ENCODE measurements at regions of chr7 and their contacts with region 1.

Region 1: GRCh38 chr7:92833024-92833765 is 3.2 kb downstream of the CDK6 start:
- DNase-seq: peak; percentile 81
- ATAC-seq: peak; percentile 65
- H3K4me3 Mint-ChIP-seq: peak overlapping the region; percentile 87
- H3K27ac Mint-ChIP-seq: peak overlapping the region; percentile 79
- H3K4me1 Mint-ChIP-seq: peaks cover 42% of the 10 kb centered on the region
- H3K27me3 Mint-ChIP-seq: no peaks in the 10 kb centered on the region
- CTCF ChIP-seq: no peak

Region 2: GRCh38 chr7:91940572-91941341 is 892.4 kb before region 1 on chr7 and contains the start of gene AKAP9:
- CTCF ChIA-PET with region 1: no interaction called
- POLR2A ChIA-PET with region 1: no interaction called
- intact Hi-C with region 1: loop called (anchors 5 kb)
- DNase-seq: peak; percentile 85
- ATAC-seq: peak; percentile 91
- H3K4me3 Mint-ChIP-seq: peak within 1 kb of the TSS; percentile 94
- H3K27ac Mint-ChIP-seq: peak within 1 kb of the TSS; percentile 93
- H3K4me1 Mint-ChIP-seq: peaks cover 42% of the 10 kb centered on the region
- H3K27me3 Mint-ChIP-seq: no peaks in the 10 kb centered on the region
- CTCF ChIP-seq: no peak
- total RNA-seq, gene AKAP9: 54.4 and 58.4 TPM in 2 replicates

Region 3: DNA sequence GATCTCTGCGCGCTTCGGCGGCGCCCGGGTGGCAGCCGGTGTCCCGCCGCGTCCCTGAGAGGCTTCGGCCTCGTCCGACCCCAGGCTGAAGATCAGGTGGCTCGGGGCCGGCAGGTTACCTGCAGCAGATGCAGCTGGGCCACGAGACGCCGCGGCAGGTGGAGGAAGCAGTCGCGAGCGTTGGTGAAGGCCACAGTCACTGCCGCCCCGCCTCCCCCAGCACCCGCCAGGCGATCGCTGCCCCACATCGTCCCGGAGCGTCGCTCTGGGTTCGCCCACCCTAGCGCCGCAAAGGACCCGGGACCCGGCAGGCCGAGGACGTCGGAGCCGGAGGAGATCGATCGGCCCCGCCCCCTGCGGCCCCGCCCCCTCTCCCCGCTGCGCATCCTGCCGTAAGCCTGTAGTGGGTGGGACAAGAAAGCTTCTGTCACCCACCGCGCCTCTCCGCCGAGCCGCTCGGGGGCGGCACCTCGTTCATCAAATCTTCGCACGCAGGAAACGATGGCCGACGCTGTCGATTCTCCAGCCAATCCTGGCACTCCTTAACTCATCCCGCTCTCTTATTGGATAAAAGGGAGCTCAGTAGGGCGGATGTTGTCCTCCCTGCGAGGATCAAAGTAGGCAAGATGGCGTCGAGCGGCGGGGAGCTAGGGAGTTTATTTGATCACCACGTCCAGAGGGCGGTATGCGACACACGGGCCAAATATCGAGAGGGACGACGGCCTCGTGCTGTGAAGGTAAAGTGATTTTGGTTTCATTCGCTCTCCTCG is 304.8 kb before region 1 on chr7 and contains the starts of genes PEX1 and RBM48:
- CTCF ChIA-PET with region 1: no interaction called
- POLR2A ChIA-PET with region 1: no interaction called
- intact Hi-C with region 1: loop called (anchors 1 kb)
- DNase-seq: peak; percentile 80
- ATAC-seq: peak; percentile 92
- H3K4me3 Mint-ChIP-seq: peak within 1 kb of the TSS; percentile 89
- H3K27ac Mint-ChIP-seq: peak within 1 kb of the TSS; percentile 93
- H3K4me1 Mint-ChIP-seq: peaks cover 24% of the 10 kb centered on the region
- H3K27me3 Mint-ChIP-seq: no peaks in the 10 kb centered on the region
- CTCF ChIP-seq: no peak
- total RNA-seq, gene PEX1: 18.2 and 21.8 TPM in 2 replicates
- total RNA-seq, gene RBM48: 21.6 and 24.3 TPM in 2 replicates

Region 4: DNA sequence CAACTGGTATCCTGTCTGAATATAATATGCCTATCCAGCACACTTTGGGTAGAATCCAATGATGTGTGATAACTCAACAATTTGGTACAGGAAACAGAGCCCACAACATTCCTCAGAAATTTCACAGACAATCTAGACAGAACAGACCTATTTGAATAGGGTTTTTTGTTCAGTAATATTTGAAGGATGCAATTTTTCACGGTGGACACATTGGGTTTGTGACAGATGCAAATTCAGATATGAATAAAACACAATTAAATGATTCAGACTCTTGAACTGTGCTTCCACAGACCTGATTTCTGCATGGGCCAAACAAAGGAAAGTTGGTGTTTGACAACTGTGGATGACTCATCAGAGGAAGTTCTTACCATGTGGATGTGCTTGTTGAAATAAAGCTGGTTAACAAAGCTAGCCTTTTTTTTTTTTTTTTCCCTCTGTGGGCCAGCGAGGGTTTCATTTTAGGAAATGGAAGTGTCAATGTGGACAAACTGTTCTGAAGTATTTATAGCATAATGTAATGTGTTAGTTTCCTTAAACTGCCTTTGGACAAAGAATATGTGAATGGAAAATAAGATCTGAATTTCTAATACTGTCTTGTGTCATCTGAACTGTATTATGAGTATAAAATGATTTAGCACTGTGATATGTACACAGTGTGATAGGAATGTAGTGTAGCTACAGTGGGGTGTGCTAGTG is 199.8 kb before region 1 on chr7:
- CTCF ChIA-PET with region 1: interaction called, 10 read pairs
- POLR2A ChIA-PET with region 1: interaction called, 8 read pairs
- intact Hi-C with region 1: loop called (anchors 2 kb)
- DNase-seq: no peak
- ATAC-seq: peak; percentile 34
- H3K4me3 Mint-ChIP-seq: peak overlapping the region; percentile 48
- H3K27ac Mint-ChIP-seq: peak overlapping the region; percentile 70
- H3K4me1 Mint-ChIP-seq: peaks cover 46% of the 10 kb centered on the region
- H3K27me3 Mint-ChIP-seq: no peaks in the 10 kb centered on the region
- CTCF ChIP-seq: no peak

Region 5: DNA sequence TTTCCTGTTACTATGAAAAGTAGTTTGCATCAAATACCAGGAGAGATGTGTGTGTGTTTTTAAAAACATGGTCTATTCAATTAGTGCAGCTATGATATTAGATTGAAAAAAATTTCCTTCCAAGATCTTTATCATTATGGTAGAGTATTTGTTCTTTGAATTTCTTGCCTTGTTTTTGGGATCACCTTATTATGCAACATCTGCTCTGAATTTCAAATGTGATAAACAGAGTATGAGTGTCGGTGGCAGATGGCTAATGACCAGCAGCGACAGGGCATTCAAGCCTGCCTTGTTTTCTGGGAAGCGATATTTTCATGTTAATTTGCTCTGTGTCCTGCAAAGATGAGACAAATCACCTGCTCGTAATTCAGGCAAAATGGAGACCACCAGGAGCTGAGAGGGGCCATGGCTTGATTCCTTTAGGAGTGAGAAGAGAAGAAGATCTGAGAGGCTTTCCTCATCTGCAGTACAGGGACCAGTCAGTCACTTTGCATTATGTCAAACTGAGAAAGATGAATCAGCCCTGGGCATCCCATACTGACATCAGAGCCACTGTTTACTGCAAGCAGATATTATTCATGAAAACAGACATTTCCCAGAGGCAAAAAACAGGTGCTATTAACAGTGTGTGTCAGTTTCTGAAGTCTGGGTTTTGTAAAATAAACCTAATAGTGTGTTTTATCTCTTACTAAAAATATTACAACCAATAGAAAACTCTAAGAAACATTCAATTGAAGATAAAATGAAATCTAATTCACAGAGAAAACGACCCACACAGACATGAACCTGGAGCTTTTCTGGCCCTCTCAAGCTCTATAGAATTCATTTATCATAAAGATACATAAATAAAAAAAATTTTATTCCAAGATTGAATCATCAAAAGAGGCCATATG is 64.4 kb before region 1 on chr7:
- CTCF ChIA-PET with region 1: interaction called, 3 read pairs
- POLR2A ChIA-PET with region 1: no interaction called
- intact Hi-C with region 1: loop called (anchors 5 kb)
- DNase-seq: no peak
- ATAC-seq: peak; percentile 75
- H3K4me3 Mint-ChIP-seq: peak overlapping the region; percentile 2
- H3K27ac Mint-ChIP-seq: peak overlapping the region; percentile 30
- H3K4me1 Mint-ChIP-seq: peaks cover 27% of the 10 kb centered on the region
- H3K27me3 Mint-ChIP-seq: no peaks in the 10 kb centered on the region
- CTCF ChIP-seq: no peak

Region 6: GRCh38 chr7:92904292-92905131 is 71.3 kb after region 1 on chr7:
- CTCF ChIA-PET with region 1: no interaction called
- POLR2A ChIA-PET with region 1: interaction called, 5 read pairs
- intact Hi-C with region 1: loop called (anchors 1 kb)
- DNase-seq: no peak
- ATAC-seq: peak; percentile 99
- H3K4me3 Mint-ChIP-seq: no peak overlapping the region
- H3K27ac Mint-ChIP-seq: peak overlapping the region; percentile 41
- H3K4me1 Mint-ChIP-seq: peaks cover 18% of the 10 kb centered on the region
- H3K27me3 Mint-ChIP-seq: no peaks in the 10 kb centered on the region
- CTCF ChIP-seq: no peak

Region 7: DNA sequence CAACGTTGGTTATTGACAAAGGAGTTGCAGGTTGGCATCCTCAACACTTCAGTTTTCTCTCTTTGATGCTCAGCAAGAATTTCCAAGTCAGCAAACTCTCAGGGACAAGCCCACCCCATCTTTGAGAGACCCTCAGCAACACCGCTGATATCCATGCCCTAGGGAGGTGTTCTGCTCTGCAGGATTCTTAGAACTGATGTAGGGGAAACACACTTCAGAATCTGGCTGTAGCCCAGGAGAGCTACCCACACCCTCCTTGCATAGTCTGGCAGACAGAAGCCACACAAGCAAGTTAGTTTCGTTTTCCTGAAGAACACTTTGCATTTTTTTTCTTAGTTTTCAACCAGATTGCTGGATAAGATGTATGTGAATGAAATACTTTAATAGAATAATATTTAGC is 314.2 kb after region 1 on chr7:
- CTCF ChIA-PET with region 1: no interaction called
- POLR2A ChIA-PET with region 1: no interaction called
- intact Hi-C with region 1: loop called (anchors 10 kb)
- DNase-seq: no peak
- ATAC-seq: peak; percentile 73
- H3K4me3 Mint-ChIP-seq: peak overlapping the region; percentile 90
- H3K27ac Mint-ChIP-seq: peak overlapping the region; percentile 83
- H3K4me1 Mint-ChIP-seq: peaks cover 58% of the 10 kb centered on the region
- H3K27me3 Mint-ChIP-seq: no peaks in the 10 kb centered on the region
- CTCF ChIP-seq: no peak

Measured in activated B cell treated with CpG ODN at 0.5 μM for 24 hours (primary cell).